Esophagus muscularis mucosa (tissue), 4 donors: ENCODE measurements at regions of chr4 and their contacts with region 1.

Region 1: DNA sequence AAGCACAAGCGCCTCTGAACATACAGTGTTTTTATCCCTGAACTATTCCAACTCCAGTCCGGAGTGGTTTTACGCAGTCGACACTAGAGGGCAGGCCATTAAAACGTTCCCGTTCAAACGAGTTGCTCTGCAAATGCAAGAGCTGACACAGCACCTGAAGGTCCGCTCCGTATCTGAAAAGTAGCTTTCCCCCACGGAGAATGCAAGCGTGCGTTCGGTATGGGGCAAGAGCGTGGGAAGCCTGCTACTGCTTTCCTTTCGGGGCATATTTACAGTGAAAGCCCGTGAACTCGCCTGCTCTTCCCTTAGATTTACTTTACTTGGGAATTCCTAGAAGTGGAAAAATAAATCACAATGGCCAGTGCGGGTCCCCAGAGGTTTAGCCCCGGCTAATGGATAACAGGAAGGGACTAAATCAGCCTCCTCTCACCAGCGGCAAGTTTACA is 190.8 kb downstream of the TSPAN5 start:
- DNase-seq: no peak
- H3K4me3 ChIP-seq: peak overlapping the region; percentile 39 to 55 (median 41)
- H3K27ac ChIP-seq: no peak overlapping the region
- H3K4me1 ChIP-seq: peaks cover 0 to 22% (median 17%) of the 10 kb centered on the region in 4 donors
- H3K27me3 ChIP-seq: no peaks in the 10 kb centered on the region
- CTCF ChIP-seq: peak; percentile 73 to 80 (median 76)
- EP300 ChIP-seq: no peak
- POLR2A ChIP-seq: no peak

Region 2: GRCh38 chr4:98658287-98659105 is 190.8 kb after region 1 on chr4 and contains the start of gene TSPAN5:
- intact Hi-C with region 1: loop called (anchors 5 kb)
- DNase-seq: no peak
- H3K4me3 ChIP-seq: peak within 1 kb of the TSS; percentile 74 to 78 (median 76)
- H3K27ac ChIP-seq: peak within 1 kb of the TSS; percentile 77 to 84 (median 81)
- H3K4me1 ChIP-seq: peaks cover 11 to 64% (median 52%) of the 10 kb centered on the region in 4 donors
- H3K27me3 ChIP-seq: no peaks in the 10 kb centered on the region
- CTCF ChIP-seq: no peak
- EP300 ChIP-seq: no peak
- POLR2A ChIP-seq: no peak
- total RNA-seq, gene TSPAN5: 9.1 to 16.8 (median 13.3) TPM

Region 3: DNA sequence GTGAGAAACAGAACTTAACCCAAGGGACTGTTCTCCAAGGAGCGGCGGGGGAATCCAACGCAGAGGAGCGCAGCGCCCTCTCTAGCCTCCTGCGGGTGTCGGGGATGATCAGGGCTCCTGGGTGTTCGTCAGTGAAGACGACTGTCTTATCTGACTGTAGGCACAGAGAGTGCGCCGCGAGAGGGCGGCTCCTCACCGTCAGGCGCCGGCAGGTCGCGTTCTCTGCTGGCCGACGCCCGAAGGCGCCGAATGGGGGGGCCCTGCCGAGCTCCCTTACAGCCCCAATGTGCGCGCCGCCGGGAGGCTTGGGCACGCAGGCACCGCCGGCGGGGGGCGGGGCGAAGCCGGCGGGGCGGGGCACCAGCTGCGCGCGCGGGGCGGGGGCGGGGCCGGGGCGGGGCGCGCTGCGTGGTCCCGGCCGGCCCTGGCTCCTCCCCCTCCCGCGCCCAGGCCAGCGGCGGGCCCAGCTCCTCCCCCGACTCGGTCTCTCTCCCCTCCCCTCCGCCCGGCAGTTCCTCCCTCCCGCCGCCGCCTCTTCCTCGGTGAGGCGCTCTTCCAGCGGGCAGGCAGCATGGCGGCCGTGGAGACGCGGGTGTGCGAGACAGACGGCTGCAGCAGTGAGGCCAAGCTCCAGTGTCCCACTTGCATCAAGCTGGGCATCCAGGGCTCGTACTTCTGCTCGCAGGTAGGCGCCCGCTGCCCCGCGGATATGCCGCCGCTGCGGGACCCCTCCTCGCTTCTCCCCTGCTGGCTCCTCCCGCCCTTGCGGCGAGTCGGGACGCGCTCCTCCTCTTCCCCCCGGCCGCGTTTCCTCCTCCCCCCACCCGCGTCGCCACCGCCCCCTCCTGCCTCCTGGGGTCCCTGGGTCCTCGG is 527.8 kb after region 1 on chr4 and contains the start of gene METAP1:
- intact Hi-C with region 1: loop called (anchors 5 kb)
- DNase-seq: peak; percentile 98
- H3K4me3 ChIP-seq: peak within 1 kb of the TSS; percentile 95 to 100 (median 98)
- H3K27ac ChIP-seq: peak within 1 kb of the TSS; percentile 84 to 94 (median 91)
- H3K4me1 ChIP-seq: peaks cover 7 to 30% (median 28%) of the 10 kb centered on the region in 4 donors
- H3K27me3 ChIP-seq: no peaks in the 10 kb centered on the region
- CTCF ChIP-seq: peak; percentile 55 to 76 (median 65)
- EP300 ChIP-seq: no peak
- POLR2A ChIP-seq: no peak
- total RNA-seq, gene METAP1: 38.4 to 58.1 (median 50.7) TPM

Region 4: GRCh38 chr4:100086592-100087435 is 1619.2 kb after region 1 on chr4:
- intact Hi-C with region 1: loop called (anchors 5 kb)
- DNase-seq: no peak
- H3K4me3 ChIP-seq: no peak overlapping the region
- H3K27ac ChIP-seq: peak overlapping the region in 1 of 4 donors; percentile 8
- H3K4me1 ChIP-seq: no peaks in the 10 kb centered on the region
- H3K27me3 ChIP-seq: no peaks in the 10 kb centered on the region
- CTCF ChIP-seq: no peak
- EP300 ChIP-seq: no peak
- POLR2A ChIP-seq: no peak